Mammary epithelial cell (primary cell): ENCODE measurements at regions of chr6 and their contacts with region 1.

Region 1: GRCh38 chr6:42453031-42453653 is 1.4 kb upstream of the TRERF1 start:
- DNase-seq: peak; percentile 78
- H3K4me3 ChIP-seq: peak overlapping the region; percentile 56 to 83 (median 59)
- H3K27ac ChIP-seq: no peak overlapping the region
- H3K4me1 ChIP-seq: peaks cover 22% of the 10 kb centered on the region
- H3K27me3 ChIP-seq: no peaks in the 10 kb centered on the region
- CTCF ChIP-seq: no peak

Region 2: DNA sequence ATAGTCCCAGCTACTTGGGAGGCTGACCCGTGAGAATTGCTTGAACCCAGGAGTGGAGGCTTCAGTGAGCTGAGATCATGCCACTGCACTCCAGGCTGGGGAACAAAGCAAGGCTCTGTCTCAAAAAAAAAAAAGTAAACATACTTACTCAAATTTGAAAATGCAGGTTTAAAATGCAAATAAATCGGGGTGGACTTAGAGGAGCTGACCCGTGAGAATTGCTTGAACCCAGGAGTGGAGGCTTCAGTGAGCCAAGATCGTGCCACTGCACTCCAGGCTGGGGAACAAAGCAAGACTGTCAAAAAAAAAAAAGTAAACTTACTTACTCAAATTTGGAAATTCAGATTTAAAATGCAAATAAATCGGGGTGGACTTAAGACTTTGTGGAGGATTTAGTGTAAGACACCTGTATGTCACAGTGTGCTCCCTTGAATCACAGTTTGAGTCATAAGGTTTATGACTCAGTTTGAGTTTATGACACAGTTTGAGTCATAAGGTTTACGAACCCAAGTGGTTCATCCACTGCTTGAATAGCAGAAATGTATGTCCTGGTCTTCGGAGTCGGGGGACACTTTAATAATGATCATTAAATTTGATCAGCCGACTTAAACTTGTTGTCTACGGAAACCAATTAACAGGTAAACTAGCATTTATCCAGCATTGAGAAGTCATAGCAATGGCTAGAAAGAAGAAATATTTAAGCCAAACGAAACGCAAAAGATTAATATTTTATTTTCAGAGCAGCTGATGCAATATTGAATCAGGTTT is 228.7 kb before region 1 on chr6:
- CTCF ChIA-PET with region 1: no interaction called
- dilution Hi-C with region 1: no loop called
- in situ Hi-C with region 1: no loop called
- intact Hi-C with region 1: loop called (anchors 5 kb)
- DNase-seq: peak; percentile 94
- H3K4me3 ChIP-seq: peak overlapping the region; percentile 1 to 19 (median 4)
- H3K27ac ChIP-seq: peak overlapping the region; percentile 95
- H3K4me1 ChIP-seq: peaks cover 66% of the 10 kb centered on the region
- H3K27me3 ChIP-seq: no peaks in the 10 kb centered on the region
- CTCF ChIP-seq: no peak

Region 3: GRCh38 chr6:42294759-42295158 is 158.4 kb before region 1 on chr6:
- CTCF ChIA-PET with region 1: no interaction called
- dilution Hi-C with region 1: no loop called
- in situ Hi-C with region 1: no loop called
- intact Hi-C with region 1: loop called (anchors 5 kb)
- DNase-seq: peak; percentile 98
- H3K4me3 ChIP-seq: no peak overlapping the region
- H3K27ac ChIP-seq: peak overlapping the region; percentile 90
- H3K4me1 ChIP-seq: peaks cover 60% of the 10 kb centered on the region
- H3K27me3 ChIP-seq: no peaks in the 10 kb centered on the region
- CTCF ChIP-seq: no peak

Region 4: GRCh38 chr6:42380228-42380979 is 72.7 kb before region 1 on chr6:
- CTCF ChIA-PET with region 1: no interaction called
- dilution Hi-C with region 1: loop called (anchors 5 kb)
- in situ Hi-C with region 1: no loop called
- intact Hi-C with region 1: no loop called
- DNase-seq: no peak
- H3K4me3 ChIP-seq: no peak overlapping the region
- H3K27ac ChIP-seq: no peak overlapping the region
- H3K4me1 ChIP-seq: no peaks in the 10 kb centered on the region
- H3K27me3 ChIP-seq: no peaks in the 10 kb centered on the region
- CTCF ChIP-seq: no peak

Region 5: GRCh38 chr6:42745707-42746462 is 292.7 kb after region 1 on chr6 and contains the start of gene TBCC:
- CTCF ChIA-PET with region 1: no interaction called
- dilution Hi-C with region 1: no loop called
- in situ Hi-C with region 1: no loop called
- intact Hi-C with region 1: loop called (anchors 10 kb)
- DNase-seq: peak; percentile 98
- H3K4me3 ChIP-seq: peak within 1 kb of the TSS; percentile 79 to 96 (median 95)
- H3K27ac ChIP-seq: peak within 1 kb of the TSS; percentile 88
- H3K4me1 ChIP-seq: peaks cover 11% of the 10 kb centered on the region
- H3K27me3 ChIP-seq: no peaks in the 10 kb centered on the region
- CTCF ChIP-seq: no peak
- total RNA-seq, gene TBCC: 13.5 to 27.8 TPM